ENCODE measurements at regions of chr5 and their contacts with region 1.

Region 1: GRCh38 chr5:170791325-170791954 is 7.9 kb downstream of the GABRP start:
- DNase-seq: peak; percentile 84
- H3K4me3 Mint-ChIP-seq: peak overlapping the region; percentile 10
- H3K27ac Mint-ChIP-seq: peak overlapping the region; percentile 84
- H3K4me1 Mint-ChIP-seq: peaks cover 60% of the 10 kb centered on the region
- H3K27me3 Mint-ChIP-seq: no peaks in the 10 kb centered on the region
- CTCF ChIP-seq: peak; percentile 83

Region 2: GRCh38 chr5:170357955-170358444 is 433.4 kb before region 1 on chr5:
- CTCF ChIA-PET with region 1: no interaction called
- intact Hi-C with region 1: no loop called
- DNase-seq: no peak
- H3K4me3 Mint-ChIP-seq: no peak overlapping the region
- H3K27ac Mint-ChIP-seq: no peak overlapping the region
- H3K4me1 Mint-ChIP-seq: no peaks in the 10 kb centered on the region
- H3K27me3 Mint-ChIP-seq: peaks cover 82% of the 10 kb centered on the region
- CTCF ChIP-seq: no peak

Region 3: DNA sequence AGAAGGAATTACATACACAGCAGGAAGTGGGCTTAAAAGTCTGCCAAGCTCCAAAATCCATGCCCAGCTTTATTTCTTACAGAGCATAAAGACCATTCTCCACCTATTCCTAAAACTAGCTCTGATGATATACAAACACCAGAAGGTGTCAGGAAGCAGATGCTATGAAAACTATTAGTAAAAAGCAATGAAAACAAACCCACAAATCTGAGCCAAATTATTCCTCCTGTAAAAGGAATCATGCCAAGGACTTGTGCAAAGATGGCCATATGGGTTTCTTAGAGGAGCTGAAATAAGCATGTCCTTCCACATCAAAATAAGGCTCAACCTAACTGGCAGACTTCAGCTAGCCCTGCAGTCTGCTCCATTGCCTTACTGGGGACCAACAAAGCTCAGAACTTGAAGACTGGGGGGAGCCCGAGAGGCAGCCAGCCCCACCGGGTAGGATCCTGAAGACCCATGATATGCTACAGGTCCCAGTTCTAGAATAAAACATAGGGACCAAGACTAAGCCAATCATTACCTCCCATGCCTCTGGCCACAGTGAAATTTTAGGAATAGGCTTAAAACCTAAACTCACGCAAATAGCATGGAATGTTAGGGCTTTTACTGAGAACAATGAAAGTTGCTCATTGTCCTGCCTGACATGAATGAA is 50.8 kb before region 1 on chr5:
- CTCF ChIA-PET with region 1: interaction called, 115 read pairs
- intact Hi-C with region 1: loop called (anchors 1 kb)
- DNase-seq: no peak
- H3K4me3 Mint-ChIP-seq: no peak overlapping the region
- H3K27ac Mint-ChIP-seq: no peak overlapping the region
- H3K4me1 Mint-ChIP-seq: peaks cover 18% of the 10 kb centered on the region
- H3K27me3 Mint-ChIP-seq: peaks cover 13% of the 10 kb centered on the region
- CTCF ChIP-seq: no peak

Region 4: DNA sequence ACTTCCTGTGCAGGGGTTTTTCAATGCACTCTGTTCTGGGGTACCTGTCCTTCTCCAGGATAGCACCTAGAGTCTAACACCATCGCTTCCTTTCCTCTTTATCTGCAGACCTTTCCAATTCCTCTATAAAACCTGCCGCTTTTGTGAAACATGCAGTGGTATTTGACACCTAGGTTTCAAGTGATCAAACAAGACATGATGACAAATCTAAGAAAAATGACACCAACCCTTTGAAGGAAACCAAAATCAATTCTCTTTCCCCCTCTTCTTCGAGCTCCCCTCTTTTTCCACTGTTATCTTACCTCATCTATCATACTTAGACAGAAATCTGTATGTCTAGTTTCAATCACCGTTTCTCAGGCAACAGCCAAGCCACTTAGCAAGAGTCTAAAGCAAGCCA is 44.8 kb after region 1 on chr5:
- CTCF ChIA-PET with region 1: no interaction called
- intact Hi-C with region 1: no loop called
- DNase-seq: peak; percentile 30
- H3K4me3 Mint-ChIP-seq: peak overlapping the region; percentile 15
- H3K27ac Mint-ChIP-seq: peak overlapping the region; percentile 53
- H3K4me1 Mint-ChIP-seq: peaks cover 40% of the 10 kb centered on the region
- H3K27me3 Mint-ChIP-seq: no peaks in the 10 kb centered on the region
- CTCF ChIP-seq: no peak

Region 5: GRCh38 chr5:170945275-170945674 is 153.8 kb after region 1 on chr5:
- CTCF ChIA-PET with region 1: no interaction called
- intact Hi-C with region 1: no loop called
- DNase-seq: no peak
- H3K4me3 Mint-ChIP-seq: no peak overlapping the region
- H3K27ac Mint-ChIP-seq: no peak overlapping the region
- H3K4me1 Mint-ChIP-seq: no peaks in the 10 kb centered on the region
- H3K27me3 Mint-ChIP-seq: no peaks in the 10 kb centered on the region
- CTCF ChIP-seq: no peak

Region 6: GRCh38 chr5:170993476-170993875 is 202.0 kb after region 1 on chr5:
- CTCF ChIA-PET with region 1: no interaction called
- intact Hi-C with region 1: no loop called
- DNase-seq: no peak
- H3K4me3 Mint-ChIP-seq: no peak overlapping the region
- H3K27ac Mint-ChIP-seq: no peak overlapping the region
- H3K4me1 Mint-ChIP-seq: no peaks in the 10 kb centered on the region
- H3K27me3 Mint-ChIP-seq: no peaks in the 10 kb centered on the region
- CTCF ChIP-seq: no peak

Measured in Calu3 (cell line).